Caco-2 (cell line): ENCODE measurements at regions of chr20 and their contacts with region 1.

Region 1: DNA sequence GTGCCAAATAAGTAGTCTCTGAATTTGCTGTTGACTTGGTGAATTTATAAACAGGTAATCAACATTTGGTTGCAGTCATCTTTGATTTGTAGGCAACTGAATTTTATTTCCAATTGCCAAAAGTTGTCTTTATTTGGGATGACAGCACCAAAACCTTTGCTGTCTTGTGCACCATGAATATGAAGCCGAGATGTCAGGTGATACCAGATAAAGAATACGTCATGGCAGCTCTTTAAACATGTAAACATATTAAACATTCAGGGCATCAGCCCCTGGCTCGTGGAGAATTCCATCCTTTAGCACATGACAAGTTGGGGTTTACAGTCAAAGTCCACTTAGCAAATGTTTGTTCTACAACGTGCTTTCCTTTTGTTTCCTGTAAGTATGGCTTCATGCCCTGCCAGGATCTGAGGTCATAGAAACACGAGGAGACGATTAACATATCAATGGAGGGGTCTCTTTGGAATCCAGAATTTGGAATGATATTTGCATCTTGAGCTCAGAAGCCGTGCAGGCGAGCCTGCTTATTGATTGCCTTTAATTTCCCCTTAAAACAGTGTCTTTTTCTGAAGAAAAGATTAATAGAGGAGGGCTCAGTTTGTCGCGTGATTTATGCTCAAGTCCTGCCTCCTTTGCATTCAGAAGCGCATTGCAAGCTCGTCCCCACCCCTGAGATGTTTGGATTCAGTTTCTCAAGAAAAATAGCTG is 170.2 kb upstream of the ZNF217 start:
- DNase-seq: peak; percentile 95 to 97
- H3K4me3 ChIP-seq: peak overlapping the region; percentile 26
- H3K4me3 Mint-ChIP-seq: peak overlapping the region; percentile 82
- H3K27ac Mint-ChIP-seq: peak overlapping the region; percentile 99
- H3K4me1 ChIP-seq: peaks cover 61% of the 10 kb centered on the region
- H3K4me1 Mint-ChIP-seq: peaks cover 55% of the 10 kb centered on the region
- H3K27me3 ChIP-seq: no peaks in the 10 kb centered on the region
- H3K27me3 Mint-ChIP-seq: no peaks in the 10 kb centered on the region
- CTCF ChIP-seq: peak; percentile 33 to 35

Region 2: GRCh38 chr20:53262294-53262859 is 501.5 kb before region 1 on chr20:
- CTCF ChIA-PET with region 1: no interaction called
- POLR2A ChIA-PET with region 1: no interaction called
- intact Hi-C with region 1: no loop called
- DNase-seq: no peak
- H3K4me3 ChIP-seq: no peak overlapping the region
- H3K4me3 Mint-ChIP-seq: no peak overlapping the region
- H3K27ac Mint-ChIP-seq: no peak overlapping the region
- H3K4me1 ChIP-seq: peaks cover 13% of the 10 kb centered on the region; the same call in 1 of the 2 replicates
- H3K4me1 Mint-ChIP-seq: peaks cover 6% of the 10 kb centered on the region
- H3K27me3 ChIP-seq: no peaks in the 10 kb centered on the region
- H3K27me3 Mint-ChIP-seq: peaks cover 4% of the 10 kb centered on the region
- CTCF ChIP-seq: no peak

Region 3: DNA sequence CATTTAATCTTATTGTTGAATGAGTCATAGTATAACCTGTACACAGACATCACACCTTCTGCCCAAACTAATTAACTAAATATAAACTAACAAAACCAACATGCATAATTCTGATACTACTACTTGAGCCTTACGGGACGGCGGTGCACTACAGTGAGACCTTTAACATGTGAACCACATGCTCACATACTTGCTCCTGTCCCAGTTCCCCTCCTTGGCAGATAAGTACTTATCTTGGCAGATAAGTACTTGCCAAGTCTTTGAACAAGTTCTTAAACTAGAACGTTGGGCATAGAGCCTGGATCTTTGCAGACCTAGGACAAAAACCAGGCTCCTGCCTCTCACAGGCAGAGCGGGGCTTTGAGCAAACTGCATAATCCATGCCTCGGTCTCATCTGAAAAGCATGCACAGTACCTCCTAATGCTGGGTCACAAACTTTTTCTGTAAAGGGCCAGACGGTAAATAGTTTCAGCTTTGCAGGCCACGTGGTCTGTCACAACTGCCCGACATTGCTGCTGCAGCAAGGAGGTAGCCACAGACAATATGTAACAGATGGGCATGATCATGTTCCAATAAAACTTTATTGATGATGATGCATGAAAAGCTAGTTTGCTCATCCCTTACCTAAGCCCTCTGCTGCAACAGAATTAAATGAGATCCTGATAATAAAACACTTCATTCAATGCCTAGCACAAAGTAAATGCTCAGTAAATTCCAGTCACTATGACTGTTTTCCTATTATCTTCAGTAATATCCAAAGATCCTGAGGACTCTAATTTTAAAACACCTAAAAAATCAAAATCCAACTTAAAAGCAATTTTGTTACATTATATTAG is 193.1 kb before region 1 on chr20:
- CTCF ChIA-PET with region 1: no interaction called
- POLR2A ChIA-PET with region 1: no interaction called
- intact Hi-C with region 1: no loop called
- DNase-seq: peak in 1 of 2 experiments; percentile 26
- H3K4me3 ChIP-seq: no peak overlapping the region
- H3K4me3 Mint-ChIP-seq: no peak overlapping the region
- H3K27ac Mint-ChIP-seq: no peak overlapping the region
- H3K4me1 ChIP-seq: no peaks in the 10 kb centered on the region
- H3K4me1 Mint-ChIP-seq: no peaks in the 10 kb centered on the region
- H3K27me3 ChIP-seq: no peaks in the 10 kb centered on the region
- H3K27me3 Mint-ChIP-seq: no peaks in the 10 kb centered on the region
- CTCF ChIP-seq: no peak

Region 4: DNA sequence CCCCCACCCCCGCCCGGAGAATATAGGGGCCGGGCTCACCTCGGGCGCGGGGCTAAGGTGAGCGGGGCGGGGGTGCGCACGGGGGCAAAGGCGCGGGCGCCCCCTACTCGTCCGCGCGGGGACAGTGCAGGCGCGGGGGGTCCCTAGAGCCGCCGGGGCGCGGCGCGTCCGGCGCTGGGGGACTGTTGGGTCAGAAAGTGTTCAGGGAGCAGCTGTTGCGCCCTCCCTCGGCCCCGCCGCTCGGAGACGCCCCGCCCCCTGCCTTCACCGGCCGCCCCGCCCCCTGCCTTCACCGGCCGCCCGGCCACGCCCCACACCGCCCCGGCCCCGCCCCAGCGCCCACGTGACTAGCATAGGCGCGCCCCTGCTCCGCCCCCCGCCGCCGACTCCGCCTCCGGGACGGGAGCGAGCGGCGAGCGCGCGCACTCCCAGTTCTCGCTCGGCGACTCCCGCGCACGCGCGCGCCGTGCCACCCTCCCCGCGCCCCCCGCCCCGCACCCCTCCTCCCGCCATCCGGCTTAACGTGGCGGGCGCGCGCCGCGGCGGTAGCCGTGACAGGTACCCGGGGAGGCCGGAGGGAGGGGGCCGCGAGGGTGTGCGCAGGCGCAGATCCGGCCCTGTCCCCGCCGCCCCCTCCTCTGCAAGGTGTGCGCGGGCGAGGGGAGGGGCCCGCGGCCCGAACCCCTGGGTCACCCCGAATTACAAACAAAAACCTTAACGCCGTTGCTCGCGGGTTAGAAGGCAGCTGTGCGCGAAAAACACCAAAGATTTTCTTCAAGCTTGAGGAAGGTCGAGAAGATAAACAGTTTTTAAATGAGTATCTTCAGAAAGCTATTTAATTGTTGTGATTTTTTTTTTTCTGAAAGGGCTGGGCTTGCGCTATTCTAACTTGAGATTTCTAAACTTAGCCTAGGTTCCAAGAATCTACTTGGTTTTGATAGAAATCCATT is 169.5 kb before region 1 on chr20:
- CTCF ChIA-PET with region 1: interaction called, 11 read pairs
- POLR2A ChIA-PET with region 1: interaction called, 7 read pairs
- intact Hi-C with region 1: loop called (anchors 2 kb)
- DNase-seq: peak; percentile 99 to 100
- H3K4me3 ChIP-seq: peak overlapping the region; percentile 98
- H3K4me3 Mint-ChIP-seq: peak overlapping the region; percentile 87
- H3K27ac Mint-ChIP-seq: peak overlapping the region; percentile 80
- H3K4me1 ChIP-seq: peaks cover 38% of the 10 kb centered on the region
- H3K4me1 Mint-ChIP-seq: peaks cover 44% of the 10 kb centered on the region
- H3K27me3 ChIP-seq: no peaks in the 10 kb centered on the region
- H3K27me3 Mint-ChIP-seq: no peaks in the 10 kb centered on the region
- CTCF ChIP-seq: peak; percentile 64 to 79

Region 5: DNA sequence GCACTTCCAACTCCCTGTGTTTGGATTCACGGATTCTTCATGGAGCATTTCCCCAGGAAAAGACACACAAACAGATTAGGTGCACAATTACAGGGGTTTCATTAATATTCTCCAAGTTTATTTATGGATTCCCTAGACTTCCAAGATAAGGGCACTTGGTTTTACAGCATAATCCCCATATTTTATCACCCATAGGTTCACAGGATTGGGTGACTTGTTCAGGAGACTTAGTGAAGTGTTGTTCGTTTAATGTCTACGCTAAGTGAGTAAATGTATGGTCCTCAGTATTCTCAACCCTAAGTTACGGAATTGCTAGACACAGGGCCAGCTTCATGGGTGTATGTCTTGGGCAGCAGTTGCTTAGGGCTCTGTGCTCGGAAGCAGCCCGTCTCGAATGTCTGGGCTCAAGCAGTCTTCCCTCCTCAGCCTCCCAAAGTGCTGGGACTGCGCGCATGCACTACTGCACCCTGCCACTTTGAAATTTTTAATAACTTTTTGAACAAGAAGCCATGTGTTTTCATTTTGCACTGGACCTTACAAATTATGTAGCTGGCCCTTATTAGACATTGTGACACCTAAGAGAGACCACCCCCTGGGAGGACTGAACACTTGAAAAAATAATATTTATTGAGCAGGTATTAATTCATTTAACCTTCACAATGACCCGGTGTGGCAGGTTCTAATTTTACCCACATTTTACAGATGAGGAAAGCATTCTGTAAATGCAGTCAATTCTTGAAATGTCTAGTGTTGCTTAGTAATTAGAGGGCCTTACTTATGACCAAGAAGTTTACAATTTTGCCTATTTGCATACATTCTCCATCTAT is 78.7 kb before region 1 on chr20:
- CTCF ChIA-PET with region 1: no interaction called
- POLR2A ChIA-PET with region 1: no interaction called
- intact Hi-C with region 1: no loop called
- DNase-seq: no peak
- H3K4me3 ChIP-seq: no peak overlapping the region
- H3K4me3 Mint-ChIP-seq: no peak overlapping the region
- H3K27ac Mint-ChIP-seq: peak overlapping the region; percentile 65
- H3K4me1 ChIP-seq: peaks cover 23% of the 10 kb centered on the region
- H3K4me1 Mint-ChIP-seq: peaks cover 20% of the 10 kb centered on the region
- H3K27me3 ChIP-seq: no peaks in the 10 kb centered on the region
- H3K27me3 Mint-ChIP-seq: no peaks in the 10 kb centered on the region
- CTCF ChIP-seq: no peak

Region 6: GRCh38 chr20:53708129-53708968 is 55.5 kb before region 1 on chr20:
- CTCF ChIA-PET with region 1: no interaction called
- POLR2A ChIA-PET with region 1: interaction called, 3 read pairs
- intact Hi-C with region 1: loop called (anchors 2 kb)
- DNase-seq: peak; percentile 54 to 71
- H3K4me3 ChIP-seq: no peak overlapping the region
- H3K4me3 Mint-ChIP-seq: peak overlapping the region; percentile 39
- H3K27ac Mint-ChIP-seq: peak overlapping the region; percentile 66
- H3K4me1 ChIP-seq: peaks cover 47% of the 10 kb centered on the region
- H3K4me1 Mint-ChIP-seq: peaks cover 43% of the 10 kb centered on the region
- H3K27me3 ChIP-seq: no peaks in the 10 kb centered on the region
- H3K27me3 Mint-ChIP-seq: no peaks in the 10 kb centered on the region
- CTCF ChIP-seq: no peak

Region 7: GRCh38 chr20:53718142-53719021 is 45.5 kb before region 1 on chr20:
- CTCF ChIA-PET with region 1: no interaction called
- POLR2A ChIA-PET with region 1: no interaction called
- intact Hi-C with region 1: no loop called
- DNase-seq: no peak
- H3K4me3 ChIP-seq: no peak overlapping the region
- H3K4me3 Mint-ChIP-seq: no peak overlapping the region
- H3K27ac Mint-ChIP-seq: peak overlapping the region; percentile 19
- H3K4me1 ChIP-seq: peaks cover 6% of the 10 kb centered on the region
- H3K4me1 Mint-ChIP-seq: peaks cover 26% of the 10 kb centered on the region
- H3K27me3 ChIP-seq: no peaks in the 10 kb centered on the region
- H3K27me3 Mint-ChIP-seq: no peaks in the 10 kb centered on the region
- CTCF ChIP-seq: no peak

Region 8: DNA sequence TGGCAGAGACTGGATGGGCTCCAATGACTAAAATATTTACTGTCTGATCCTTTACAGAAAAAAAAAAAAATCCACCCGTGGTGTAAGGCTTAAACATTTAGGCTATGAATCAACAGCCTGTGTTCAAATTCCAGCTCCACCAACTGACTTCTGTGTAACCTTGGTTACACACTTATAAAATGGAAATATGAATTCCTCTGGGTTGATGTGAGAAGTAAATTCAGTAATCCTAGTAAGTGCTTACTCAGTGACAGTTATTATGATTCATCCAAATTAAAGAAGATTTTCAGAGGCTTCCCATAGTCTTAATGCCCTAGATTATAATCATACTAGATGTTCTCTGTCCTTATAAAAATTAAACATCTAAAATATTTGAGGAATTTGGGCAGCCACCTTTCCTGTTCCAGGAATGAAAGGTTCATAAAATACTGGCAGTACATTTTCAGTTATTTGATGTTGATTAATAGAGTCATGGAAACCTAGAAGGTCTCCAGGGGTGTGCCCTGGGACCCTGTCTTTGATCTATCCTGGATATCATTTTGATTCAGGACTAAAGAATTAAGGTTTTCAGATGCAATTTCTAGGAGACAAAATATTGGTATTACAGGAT is 10.0 kb after region 1 on chr20:
- CTCF ChIA-PET with region 1: no interaction called
- POLR2A ChIA-PET with region 1: interaction called, 14 read pairs
- intact Hi-C with region 1: no loop called
- DNase-seq: peak; percentile 29 to 52
- H3K4me3 ChIP-seq: no peak overlapping the region
- H3K4me3 Mint-ChIP-seq: peak overlapping the region; percentile 22
- H3K27ac Mint-ChIP-seq: peak overlapping the region; percentile 66
- H3K4me1 ChIP-seq: peaks cover 60% of the 10 kb centered on the region
- H3K4me1 Mint-ChIP-seq: peaks cover 64% of the 10 kb centered on the region
- H3K27me3 ChIP-seq: no peaks in the 10 kb centered on the region
- H3K27me3 Mint-ChIP-seq: no peaks in the 10 kb centered on the region
- CTCF ChIP-seq: no peak

Region 9: GRCh38 chr20:53800808-53801604 is 37.1 kb after region 1 on chr20:
- CTCF ChIA-PET with region 1: interaction called, 9 read pairs
- POLR2A ChIA-PET with region 1: interaction called, 10 read pairs
- intact Hi-C with region 1: loop called (anchors 1 kb)
- DNase-seq: peak; percentile 97 to 99
- H3K4me3 ChIP-seq: peak overlapping the region; percentile 21
- H3K4me3 Mint-ChIP-seq: peak overlapping the region; percentile 74
- H3K27ac Mint-ChIP-seq: peak overlapping the region; percentile 95
- H3K4me1 ChIP-seq: peaks cover 54% of the 10 kb centered on the region
- H3K4me1 Mint-ChIP-seq: peaks cover 67% of the 10 kb centered on the region
- H3K27me3 ChIP-seq: no peaks in the 10 kb centered on the region
- H3K27me3 Mint-ChIP-seq: no peaks in the 10 kb centered on the region
- CTCF ChIP-seq: no peak